PC-9 (cell line): ENCODE measurements at regions of chr7 and their contacts with region 1.

Region 1: DNA sequence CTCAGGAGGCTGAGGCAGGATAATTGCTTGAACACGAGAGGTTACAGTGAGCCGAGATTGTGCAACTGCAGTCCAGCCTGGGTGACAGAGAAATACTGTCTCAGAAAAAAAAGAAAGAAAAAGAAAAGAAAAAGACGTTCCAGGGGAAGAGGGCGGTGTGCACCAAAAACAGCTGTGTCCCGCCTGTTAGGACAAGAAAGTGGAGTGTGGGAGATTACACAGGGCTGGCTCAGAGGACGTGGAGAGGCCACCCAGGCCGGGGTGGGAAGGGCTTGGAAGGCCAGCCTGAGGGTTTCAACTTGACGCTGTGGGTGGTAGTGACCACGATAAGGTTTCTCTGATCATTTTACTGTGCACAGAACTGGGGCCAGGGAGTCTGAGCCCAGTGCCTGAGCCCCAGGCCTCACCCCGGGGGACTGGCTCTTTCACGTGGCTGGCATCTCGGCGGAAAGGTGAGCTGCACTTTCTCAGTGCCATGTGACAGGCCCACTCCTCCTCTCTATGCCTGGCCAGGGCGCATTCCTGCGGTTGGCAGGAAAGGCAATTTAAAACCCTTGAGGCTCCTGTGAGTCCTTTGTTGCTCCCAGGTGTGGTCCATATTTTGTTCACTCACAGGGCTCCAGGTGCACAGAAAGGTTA is 13.9 kb downstream of the RHBDD2 start:
- DNase-seq: peak; percentile 94 to 95
- H3K4me3 ChIP-seq: no peak overlapping the region
- H3K27ac ChIP-seq: peak overlapping the region; percentile 92
- H3K4me1 ChIP-seq: peaks cover 43% of the 10 kb centered on the region
- H3K27me3 ChIP-seq: no peaks in the 10 kb centered on the region
- CTCF ChIP-seq: no peak

Region 2: GRCh38 chr7:75878769-75879611 is 13.8 kb before region 1 on chr7 and contains the start of gene RHBDD2:
- CTCF ChIA-PET with region 1: no interaction called
- POLR2A ChIA-PET with region 1: no interaction called
- intact Hi-C with region 1: loop called (anchors 1 kb)
- DNase-seq: peak; percentile 76 to 94
- H3K4me3 ChIP-seq: peak within 1 kb of the TSS; percentile 89
- H3K27ac ChIP-seq: no peak within 1 kb of the TSS
- H3K4me1 ChIP-seq: peaks cover 13% of the 10 kb centered on the region
- H3K27me3 ChIP-seq: no peaks in the 10 kb centered on the region
- CTCF ChIP-seq: no peak
- total RNA-seq, gene RHBDD2: 71.7 and 75.6 TPM in 2 replicates

Region 3: DNA sequence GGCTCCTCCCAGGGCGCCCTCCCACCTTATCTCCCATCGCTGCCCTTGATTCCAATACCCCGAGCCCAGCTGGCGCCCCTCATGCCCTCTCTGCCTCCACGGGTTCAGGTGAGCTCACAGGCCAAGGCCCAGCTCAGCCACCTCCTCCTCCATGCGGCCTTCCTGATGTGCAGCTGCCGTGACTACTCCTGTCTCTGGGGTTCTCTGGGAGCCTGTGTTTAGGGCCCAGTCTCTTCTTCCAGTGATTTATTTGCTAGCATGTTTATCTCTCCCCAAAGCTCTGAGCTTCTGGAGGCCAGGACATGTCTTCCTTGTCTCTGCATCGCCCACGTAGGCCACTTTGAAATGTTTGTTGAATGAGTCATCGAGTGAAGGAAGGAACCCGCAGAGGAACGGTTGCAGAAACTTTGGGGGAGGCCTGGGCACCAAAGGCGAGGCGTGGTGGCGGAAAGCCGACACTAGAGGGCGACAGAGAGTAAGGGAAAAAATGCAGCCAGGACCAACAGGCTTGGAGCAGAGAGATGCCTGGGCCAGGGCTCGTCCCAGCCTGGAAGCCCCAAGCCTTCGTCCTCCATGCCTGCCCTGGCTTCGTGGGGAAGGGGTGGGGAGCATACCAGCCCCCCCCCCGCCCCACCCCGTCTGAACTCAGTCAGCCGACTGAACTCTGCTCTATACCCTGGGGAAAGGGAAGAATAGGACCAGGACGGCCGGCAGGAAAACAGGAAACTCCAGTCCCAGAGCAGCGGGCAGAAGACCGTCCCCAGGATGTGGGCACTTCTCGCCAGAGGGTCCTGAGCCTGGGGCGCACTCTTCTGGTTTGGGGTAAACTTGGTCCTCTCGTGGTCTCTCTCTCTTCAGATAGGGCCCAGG is 398.8 kb after region 1 on chr7:
- CTCF ChIA-PET with region 1: no interaction called
- POLR2A ChIA-PET with region 1: no interaction called
- intact Hi-C with region 1: no loop called
- DNase-seq: peak; percentile 97 to 100
- H3K4me3 ChIP-seq: peak overlapping the region; percentile 57
- H3K27ac ChIP-seq: peak overlapping the region; percentile 93
- H3K4me1 ChIP-seq: peaks cover 60% of the 10 kb centered on the region
- H3K27me3 ChIP-seq: no peaks in the 10 kb centered on the region
- CTCF ChIP-seq: peak; percentile 97